ENCODE measurements at regions of chr4 and their contacts with region 1.

Region 1: GRCh38 chr4:69896530-69897116 is 34.2 kb upstream of the CSN1S1 start:
- DNase-seq: no peak
- ATAC-seq: no peak
- H3K4me3 ChIP-seq: no peak overlapping the region
- H3K4me1 ChIP-seq: no peaks in the 10 kb centered on the region
- CTCF ChIP-seq: peak; percentile 18

Region 2: DNA sequence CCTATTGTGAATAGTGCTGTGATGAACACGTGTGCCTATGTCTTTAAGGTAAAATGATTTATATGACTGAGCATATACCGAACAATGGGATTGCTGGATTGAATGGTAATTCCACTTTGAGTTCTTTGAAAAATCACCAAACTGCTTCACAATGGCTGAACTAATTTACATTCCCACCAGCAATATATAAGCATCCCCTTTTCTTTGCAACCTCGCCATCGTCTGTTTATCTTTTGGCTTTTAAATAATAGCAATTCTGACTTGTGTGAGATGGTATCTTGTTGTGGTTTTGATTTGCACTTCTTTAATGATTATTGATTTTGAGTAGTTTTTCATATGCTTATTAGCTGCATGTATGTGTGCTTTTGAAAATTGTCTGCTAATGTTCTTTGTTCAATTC is 211.8 kb before region 1 on chr4:
- intact Hi-C with region 1: no loop called
- DNase-seq: no peak
- ATAC-seq: no peak
- H3K4me3 ChIP-seq: no peak overlapping the region
- H3K4me1 ChIP-seq: no peaks in the 10 kb centered on the region
- CTCF ChIP-seq: no peak

Region 3: GRCh38 chr4:70183168-70183939 is 286.7 kb after region 1 on chr4:
- intact Hi-C with region 1: loop called in 1 of 2 experiments (anchors 2 kb)
- DNase-seq: peak in 1 of 3 donors; percentile 61
- ATAC-seq: peak; percentile 50
- H3K4me3 ChIP-seq: no peak overlapping the region
- H3K4me1 ChIP-seq: no peaks in the 10 kb centered on the region
- CTCF ChIP-seq: peak; percentile 27

Region 4: GRCh38 chr4:70306076-70306475 is 409.5 kb after region 1 on chr4:
- intact Hi-C with region 1: no loop called
- DNase-seq: no peak
- ATAC-seq: no peak
- H3K4me3 ChIP-seq: no peak overlapping the region
- H3K4me1 ChIP-seq: no peaks in the 10 kb centered on the region
- CTCF ChIP-seq: no peak

Measured in mucosa of descending colon (tissue), 3 donors.